Motor neuron (in vitro differentiated cells): ENCODE measurements at regions of chr2 and their contacts with region 1.

Region 1: GRCh38 chr2:166539340-166540162 is 45.5 kb upstream of the SCN7A start:
- ATAC-seq: peak; percentile 74 to 98 (median 88)
- H3K4me3 ChIP-seq: no peak overlapping the region
- H3K27ac ChIP-seq: no peak overlapping the region
- H3K4me1 ChIP-seq: no peaks in the 10 kb centered on the region

Region 2: DNA sequence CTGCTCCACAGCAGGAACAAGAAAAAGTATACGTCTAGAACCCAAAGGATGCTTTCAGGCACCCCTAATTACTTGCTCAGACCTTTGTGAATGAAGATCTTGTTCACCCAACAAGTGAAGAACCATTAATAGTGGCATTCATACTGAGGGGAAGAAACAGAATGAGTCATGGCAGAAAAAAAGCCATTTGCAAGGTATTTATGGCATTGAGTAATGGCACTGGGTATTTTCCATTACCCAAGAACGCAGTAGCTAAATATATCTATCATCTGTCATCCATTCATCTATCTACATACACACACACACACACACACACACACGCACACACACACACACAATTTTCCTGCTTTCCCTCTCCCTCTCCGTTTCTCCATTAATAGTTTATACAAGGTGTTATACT is 292.4 kb after region 1 on chr2:
- in situ Hi-C with region 1: no loop called
- ATAC-seq: peak in 6 of 8 experiments; percentile 42 to 91 (median 78)
- H3K4me3 ChIP-seq: no peak overlapping the region
- H3K27ac ChIP-seq: no peak overlapping the region
- H3K4me1 ChIP-seq: no peaks in the 10 kb centered on the region

Region 3: GRCh38 chr2:167212014-167212648 is 672.6 kb after region 1 on chr2:
- in situ Hi-C with region 1: loop called in 1 of 9 experiments (anchors 25 kb)
- ATAC-seq: peak in 4 of 8 experiments; percentile 34 to 65 (median 44)
- H3K4me3 ChIP-seq: no peak overlapping the region
- H3K27ac ChIP-seq: no peak overlapping the region
- H3K4me1 ChIP-seq: no peaks in the 10 kb centered on the region

Region 4: GRCh38 chr2:167249197-167249596 is 709.6 kb after region 1 on chr2:
- in situ Hi-C with region 1: loop called in 1 of 9 experiments (anchors 25 kb)
- ATAC-seq: no peak
- H3K4me3 ChIP-seq: no peak overlapping the region
- H3K27ac ChIP-seq: no peak overlapping the region
- H3K4me1 ChIP-seq: no peaks in the 10 kb centered on the region

Region 5: GRCh38 chr2:168118733-168119514 is 1579.4 kb after region 1 on chr2:
- in situ Hi-C with region 1: loop called in 4 of 9 experiments (anchors 25 kb)
- ATAC-seq: peak; percentile 58 to 92 (median 76)
- H3K4me3 ChIP-seq: no peak overlapping the region
- H3K27ac ChIP-seq: no peak overlapping the region
- H3K4me1 ChIP-seq: peaks cover 2 to 3% of the 10 kb centered on the region in 2 donors